ENCODE measurements at regions of chr7 and their contacts with region 1.

Region 1: GRCh38 chr7:41869997-41870396 is 167.1 kb upstream of the INHBA start:
- DNase-seq: no peak
- ATAC-seq: peak in 4 of 8 donors; percentile 32 to 71 (median 40)
- H3K4me3 ChIP-seq: no peak overlapping the region
- H3K27ac ChIP-seq: peak overlapping the region in 6 of 10 donors; percentile 9 to 77 (median 50)
- H3K4me1 ChIP-seq: peaks cover 0 to 32% (median 0%) of the 10 kb centered on the region in 9 donors
- H3K27me3 ChIP-seq: no peaks in the 10 kb centered on the region
- CTCF ChIP-seq: no peak

Region 2: DNA sequence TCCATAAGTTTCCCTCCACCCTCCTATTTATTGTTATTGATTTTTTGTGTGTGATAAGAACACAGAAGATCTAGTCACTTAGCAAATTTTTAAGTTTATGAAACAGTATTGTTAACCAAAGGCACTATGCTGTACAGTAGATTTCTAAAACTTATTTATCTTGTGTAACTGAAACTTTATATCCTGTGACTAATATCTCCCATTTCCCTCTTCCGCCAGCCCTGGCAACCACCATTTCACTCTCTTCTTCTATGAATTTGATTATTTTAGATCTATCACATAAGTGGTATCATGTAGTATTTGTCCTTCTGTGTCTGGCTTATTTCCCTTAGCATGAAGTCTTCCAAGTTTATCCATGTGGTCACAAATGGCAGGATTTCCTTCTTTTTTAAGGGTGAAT is 22.8 kb before region 1 on chr7:
- intact Hi-C with region 1: no loop called
- DNase-seq: no peak
- ATAC-seq: no peak
- H3K4me3 ChIP-seq: no peak overlapping the region
- H3K27ac ChIP-seq: no peak overlapping the region
- H3K4me1 ChIP-seq: no peaks in the 10 kb centered on the region
- H3K27me3 ChIP-seq: no peaks in the 10 kb centered on the region
- CTCF ChIP-seq: no peak

Region 3: GRCh38 chr7:43470110-43470509 is 1600.1 kb after region 1 on chr7:
- intact Hi-C with region 1: loop called in 1 of 10 experiments (anchors 5 kb)
- DNase-seq: no peak
- ATAC-seq: no peak
- H3K4me3 ChIP-seq: no peak overlapping the region
- H3K27ac ChIP-seq: no peak overlapping the region
- H3K4me1 ChIP-seq: no peaks in the 10 kb centered on the region
- H3K27me3 ChIP-seq: peaks cover 0 to 6% (median 0%) of the 10 kb centered on the region in 7 donors
- CTCF ChIP-seq: no peak